ENCODE measurements at regions of chr3 and their contacts with region 1.

Region 1: GRCh38 chr3:31544634-31545033 is 11.9 kb downstream of the STT3B start:
- DNase-seq: no peak
- H3K4me3 ChIP-seq: no peak overlapping the region
- H3K27ac ChIP-seq: no peak overlapping the region
- H3K27me3 ChIP-seq: no peaks in the 10 kb centered on the region
- CTCF ChIP-seq: no peak

Region 2: GRCh38 chr3:30970183-30970582 is 574.5 kb before region 1 on chr3:
- CTCF ChIA-PET with region 1: no interaction called
- POLR2A ChIA-PET with region 1: no interaction called
- DNase-seq: no peak
- H3K4me3 ChIP-seq: no peak overlapping the region
- H3K27ac ChIP-seq: no peak overlapping the region
- H3K27me3 ChIP-seq: peaks cover 3% of the 10 kb centered on the region
- CTCF ChIP-seq: 0 out of 2 replicates have a peak, but pooled peaks have one; percentile 16

Region 3: GRCh38 chr3:30996467-30997052 is 548.1 kb before region 1 on chr3:
- CTCF ChIA-PET with region 1: no interaction called
- POLR2A ChIA-PET with region 1: no interaction called
- DNase-seq: no peak
- H3K4me3 ChIP-seq: no peak overlapping the region
- H3K27ac ChIP-seq: no peak overlapping the region
- H3K27me3 ChIP-seq: no peaks in the 10 kb centered on the region
- CTCF ChIP-seq: no peak

Region 4: DNA sequence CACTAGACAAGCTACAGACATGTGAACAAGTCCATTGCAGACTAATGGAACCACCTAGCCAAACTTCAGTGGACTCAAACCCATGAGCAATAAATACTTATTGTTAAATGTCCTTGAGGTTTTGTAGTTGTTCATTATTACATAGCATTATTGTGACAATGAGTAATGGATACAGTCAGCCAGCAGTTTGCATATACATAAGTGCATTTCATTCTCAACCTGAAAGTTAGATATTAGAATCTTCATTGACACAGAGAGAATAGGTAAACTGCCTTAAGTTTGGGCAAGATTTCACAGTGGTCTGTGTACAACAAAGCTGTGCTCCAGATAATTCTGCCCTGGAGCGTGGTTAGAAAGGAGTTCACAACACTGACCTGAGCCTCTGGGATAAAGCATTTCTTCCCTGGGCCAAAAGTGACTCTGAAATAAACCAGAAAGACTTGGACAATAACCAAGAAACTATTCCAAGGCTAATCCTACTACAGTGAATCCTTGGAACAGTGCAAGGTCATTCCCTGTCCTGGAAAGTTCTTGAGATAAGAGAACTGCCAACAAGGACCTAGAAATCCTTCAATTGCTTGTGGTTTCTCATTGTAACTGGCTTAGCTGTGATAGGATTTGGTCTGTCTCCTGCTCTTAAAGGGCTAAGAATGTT is 237.4 kb before region 1 on chr3:
- CTCF ChIA-PET with region 1: no interaction called
- POLR2A ChIA-PET with region 1: no interaction called
- DNase-seq: no peak
- H3K4me3 ChIP-seq: no peak overlapping the region
- H3K27ac ChIP-seq: no peak overlapping the region
- H3K27me3 ChIP-seq: no peaks in the 10 kb centered on the region
- CTCF ChIP-seq: no peak

Region 5: DNA sequence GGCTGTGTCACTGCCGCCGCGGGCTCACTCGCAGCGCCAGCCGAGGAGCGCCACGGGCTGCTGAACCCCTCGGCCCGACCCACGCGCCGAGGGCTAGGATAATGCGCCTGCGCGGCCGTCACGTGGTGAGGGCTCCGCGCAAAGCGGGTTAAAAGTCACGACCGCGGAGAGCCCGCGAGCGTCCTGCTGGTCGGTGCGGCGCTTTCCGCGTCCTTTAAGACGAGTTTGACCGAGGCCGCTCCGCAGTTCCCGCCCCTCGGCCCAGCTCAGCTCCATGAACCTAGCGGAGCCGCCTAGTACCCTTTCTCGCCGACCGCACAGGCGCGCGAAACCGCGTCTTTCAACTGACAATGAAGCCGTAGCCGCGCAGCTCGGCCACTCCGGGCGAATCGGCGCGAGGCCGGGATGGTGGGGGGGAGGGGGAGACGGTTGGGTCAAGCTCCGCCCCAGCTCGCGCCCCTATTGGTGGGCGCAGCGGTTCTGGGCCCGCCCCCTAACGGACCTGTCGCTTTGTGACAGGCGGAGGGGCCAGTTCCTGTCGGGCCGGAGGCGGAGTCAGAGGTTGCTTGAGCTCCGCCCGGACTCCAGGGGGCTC is 12.5 kb before region 1 on chr3:
- CTCF ChIA-PET with region 1: interaction called, 8 read pairs
- POLR2A ChIA-PET with region 1: interaction called, 16 read pairs
- DNase-seq: peak; percentile 98
- H3K4me3 ChIP-seq: peak overlapping the region; percentile 84
- H3K27ac ChIP-seq: peak overlapping the region; percentile 99
- H3K27me3 ChIP-seq: no peaks in the 10 kb centered on the region
- CTCF ChIP-seq: no peak

Region 6: GRCh38 chr3:31661993-31662686 is 117.5 kb after region 1 on chr3:
- CTCF ChIA-PET with region 1: no interaction called
- POLR2A ChIA-PET with region 1: no interaction called
- DNase-seq: no peak
- H3K4me3 ChIP-seq: no peak overlapping the region
- H3K27ac ChIP-seq: no peak overlapping the region
- H3K27me3 ChIP-seq: no peaks in the 10 kb centered on the region
- CTCF ChIP-seq: no peak

Measured in AG04450 (cell line).